Activated CD8-positive, alpha-beta T cell treated with anti-CD3 and anti-CD28 coated beads for 36 hours (primary cell): ENCODE measurements at regions of chr14 and their contacts with region 1.

Region 1: GRCh38 chr14:67837011-67837624 is 17.5 kb downstream of the RAD51B start:
- DNase-seq: peak; percentile 61
- ATAC-seq: no peak
- H3K4me3 Mint-ChIP-seq: no peak overlapping the region
- H3K27ac Mint-ChIP-seq: no peak overlapping the region
- H3K4me1 Mint-ChIP-seq: no peaks in the 10 kb centered on the region
- H3K27me3 Mint-ChIP-seq: no peaks in the 10 kb centered on the region
- CTCF ChIP-seq: peak; percentile 58

Region 2: GRCh38 chr14:67852926-67853604 is 15.9 kb after region 1 on chr14:
- CTCF ChIA-PET with region 1: interaction called, 10 read pairs
- POLR2A ChIA-PET with region 1: no interaction called
- intact Hi-C with region 1: no loop called
- DNase-seq: no peak
- ATAC-seq: no peak
- H3K4me3 Mint-ChIP-seq: no peak overlapping the region
- H3K27ac Mint-ChIP-seq: no peak overlapping the region
- H3K4me1 Mint-ChIP-seq: peaks cover 3% of the 10 kb centered on the region
- H3K27me3 Mint-ChIP-seq: no peaks in the 10 kb centered on the region
- CTCF ChIP-seq: no peak

Region 3: DNA sequence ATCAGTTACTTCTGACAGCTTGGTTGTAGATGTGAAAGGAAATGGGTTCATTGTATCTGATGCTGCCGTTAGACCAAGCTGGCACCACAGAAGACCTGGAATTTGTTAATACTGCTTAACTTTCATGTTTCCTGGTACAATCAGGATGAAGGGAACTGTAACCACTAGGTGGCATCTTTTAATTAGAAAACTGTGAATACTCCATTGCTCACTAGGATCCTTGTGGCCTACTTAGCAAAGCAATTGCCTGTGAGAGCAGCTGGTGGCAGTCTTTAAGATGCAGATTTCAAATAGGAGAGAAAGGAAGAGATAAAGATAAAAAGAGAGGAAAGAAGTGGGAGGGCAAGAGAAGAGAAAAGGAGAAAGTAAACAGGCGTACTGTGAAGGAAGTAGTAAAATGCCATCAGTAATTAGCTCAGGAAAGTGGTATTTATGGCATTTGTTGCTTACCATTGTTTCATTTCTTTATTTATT is 96.9 kb after region 1 on chr14:
- CTCF ChIA-PET with region 1: interaction called, 10 read pairs
- POLR2A ChIA-PET with region 1: no interaction called
- intact Hi-C with region 1: no loop called
- DNase-seq: peak; percentile 7
- ATAC-seq: peak; percentile 56
- H3K4me3 Mint-ChIP-seq: no peak overlapping the region
- H3K27ac Mint-ChIP-seq: no peak overlapping the region
- H3K4me1 Mint-ChIP-seq: peaks cover 4% of the 10 kb centered on the region
- H3K27me3 Mint-ChIP-seq: no peaks in the 10 kb centered on the region
- CTCF ChIP-seq: peak; percentile 70

Region 4: DNA sequence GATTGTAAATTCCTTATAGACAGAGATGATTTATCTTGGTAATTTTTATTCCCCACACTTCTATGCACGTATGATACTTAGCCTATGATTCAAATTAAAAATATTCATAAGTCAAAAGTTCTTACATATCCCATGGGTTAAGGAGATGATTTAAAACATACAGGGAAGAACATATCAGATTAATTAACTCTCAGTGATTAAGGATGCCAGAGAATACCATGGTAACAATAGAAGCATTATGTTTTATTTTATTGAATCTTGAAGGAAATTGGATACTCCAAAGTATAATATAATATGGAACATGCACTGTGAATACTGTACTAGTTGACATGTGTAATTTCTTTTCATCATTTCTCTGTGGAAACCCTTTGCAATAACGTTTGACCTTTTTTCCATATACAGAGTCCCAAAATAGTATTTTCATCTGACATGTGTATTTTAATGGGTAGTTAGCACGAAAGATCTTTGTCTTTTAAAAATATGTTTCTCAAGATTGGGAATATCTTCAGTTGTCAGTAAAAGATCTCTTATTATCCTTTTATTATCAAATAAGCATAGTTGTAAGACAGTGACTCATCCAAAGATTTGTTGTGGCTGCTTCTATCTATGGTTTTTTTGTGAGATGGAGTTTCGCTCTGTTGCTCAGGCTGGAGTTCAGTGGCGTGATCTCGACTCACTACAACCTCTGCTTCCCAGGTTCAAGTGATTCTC is 149.2 kb after region 1 on chr14:
- CTCF ChIA-PET with region 1: no interaction called
- POLR2A ChIA-PET with region 1: no interaction called
- intact Hi-C with region 1: no loop called
- DNase-seq: no peak
- ATAC-seq: no peak
- H3K4me3 Mint-ChIP-seq: no peak overlapping the region
- H3K27ac Mint-ChIP-seq: no peak overlapping the region
- H3K4me1 Mint-ChIP-seq: no peaks in the 10 kb centered on the region
- H3K27me3 Mint-ChIP-seq: no peaks in the 10 kb centered on the region
- CTCF ChIP-seq: no peak